Right cardiac atrium (tissue), 5 donors: ENCODE measurements at regions of chr4 and their contacts with region 1.

Region 1: DNA sequence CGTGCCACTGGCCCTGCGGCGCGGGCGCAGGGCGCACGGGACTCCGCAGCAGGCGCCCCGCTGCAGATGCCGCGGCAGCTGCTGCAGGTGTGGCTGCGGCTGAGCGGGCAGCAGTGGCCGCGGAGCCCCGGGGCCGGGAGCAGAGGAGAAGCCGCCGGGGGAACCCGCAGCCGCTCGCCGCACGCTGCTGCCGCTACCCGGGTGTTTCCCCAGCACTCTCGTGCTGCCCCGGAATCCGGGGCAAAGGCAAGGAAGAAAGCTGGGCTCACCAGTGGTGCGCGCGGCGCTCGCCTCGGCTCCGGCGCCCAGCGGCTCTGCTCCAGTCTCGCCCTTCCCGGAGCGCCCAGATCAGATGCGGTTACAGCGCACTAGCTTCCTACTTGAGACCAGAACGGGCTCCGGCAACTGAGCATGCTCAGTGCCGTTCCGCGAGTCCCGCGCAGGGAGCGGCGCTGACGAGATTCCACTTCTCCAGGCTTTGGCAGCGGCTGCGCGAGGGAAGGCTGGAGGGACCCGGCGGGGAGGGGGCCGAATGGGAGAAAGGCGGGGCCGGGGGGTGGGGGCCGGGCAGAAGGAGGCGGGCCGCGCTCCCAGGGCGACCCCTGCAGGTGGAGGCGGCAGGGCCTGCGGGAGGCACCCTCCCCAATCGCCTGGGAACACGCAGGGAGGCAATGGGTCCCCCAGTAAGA is at the start of gene APBB2:
- DNase-seq: peak; percentile 95 to 98 (median 98)
- ATAC-seq: peak; percentile 95 to 96
- H3K4me3 ChIP-seq: peak within 1 kb of the TSS; percentile 78
- H3K27ac ChIP-seq: peak within 1 kb of the TSS; percentile 81
- H3K4me1 ChIP-seq: peaks cover 6% of the 10 kb centered on the region
- H3K27me3 ChIP-seq: no peaks in the 10 kb centered on the region
- total RNA-seq, gene APBB2: 36.6 to 46.2 (median 39.6) TPM

Region 2: GRCh38 chr4:40924096-40924792 is 290.0 kb before region 1 on chr4:
- intact Hi-C with region 1: loop called (anchors 5 to 10 kb)
- DNase-seq: peak; percentile 59 to 85 (median 84)
- ATAC-seq: peak; percentile 57 to 66
- H3K4me3 ChIP-seq: no peak overlapping the region
- H3K27ac ChIP-seq: peak overlapping the region; percentile 13
- H3K4me1 ChIP-seq: peaks cover 5% of the 10 kb centered on the region
- H3K27me3 ChIP-seq: no peaks in the 10 kb centered on the region

Region 3: DNA sequence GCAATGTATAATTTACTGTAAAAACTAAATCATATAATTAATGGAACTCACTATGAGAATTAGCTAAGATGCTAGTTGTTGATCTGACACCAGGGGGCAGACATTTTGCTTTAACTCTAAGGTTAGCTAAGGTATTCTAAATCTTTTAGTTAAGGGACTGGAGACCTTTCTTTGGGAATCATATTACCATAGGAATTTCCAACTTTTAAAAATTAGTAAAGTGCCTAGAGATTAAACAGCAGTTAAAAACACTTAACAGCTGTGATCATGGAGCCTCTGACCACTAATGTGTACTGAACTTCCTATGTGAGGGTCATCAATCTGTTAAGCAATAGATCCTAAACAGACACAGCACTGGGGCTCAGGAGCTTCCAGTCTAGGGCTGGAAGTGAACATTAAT is 237.9 kb before region 1 on chr4:
- intact Hi-C with region 1: loop called (anchors 2 to 5 kb)
- DNase-seq: no peak
- ATAC-seq: peak; percentile 33 to 52
- H3K4me3 ChIP-seq: no peak overlapping the region
- H3K27ac ChIP-seq: no peak overlapping the region
- H3K4me1 ChIP-seq: peaks cover 1% of the 10 kb centered on the region
- H3K27me3 ChIP-seq: no peaks in the 10 kb centered on the region

Region 4: GRCh38 chr4:41050866-41051775 is 163.2 kb before region 1 on chr4:
- intact Hi-C with region 1: loop called in 1 of 4 experiments (anchors 5 kb)
- DNase-seq: peak; percentile 33 to 49 (median 49)
- ATAC-seq: peak; percentile 63 to 93
- H3K4me3 ChIP-seq: no peak overlapping the region
- H3K27ac ChIP-seq: peak overlapping the region; percentile 87
- H3K4me1 ChIP-seq: peaks cover 9% of the 10 kb centered on the region
- H3K27me3 ChIP-seq: no peaks in the 10 kb centered on the region

Region 5: DNA sequence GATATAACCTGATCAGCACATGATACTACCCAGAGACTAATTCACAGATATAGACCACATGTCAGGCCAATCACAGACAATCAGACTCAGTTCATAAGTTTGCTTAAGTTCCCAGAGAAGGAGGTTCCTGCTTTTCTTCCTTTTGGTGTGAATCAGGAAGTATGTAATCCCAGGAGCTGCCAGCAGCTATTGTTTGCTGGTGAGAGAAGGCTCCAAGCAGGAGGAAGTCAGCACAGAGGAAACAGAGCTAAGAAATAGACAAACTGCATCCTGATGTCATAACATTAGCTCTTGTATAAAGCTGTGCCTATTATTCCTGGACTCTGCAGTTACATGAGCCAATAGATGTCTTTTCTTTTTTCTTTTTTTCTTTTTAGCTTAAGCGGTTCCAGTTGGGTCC is 93.4 kb after region 1 on chr4:
- intact Hi-C with region 1: no loop called
- DNase-seq: no peak
- ATAC-seq: peak; percentile 63 to 84
- H3K4me3 ChIP-seq: no peak overlapping the region
- H3K27ac ChIP-seq: no peak overlapping the region
- H3K4me1 ChIP-seq: peaks cover 2% of the 10 kb centered on the region
- H3K27me3 ChIP-seq: no peaks in the 10 kb centered on the region

Region 6: GRCh38 chr4:41360214-41360920 is 146.1 kb after region 1 on chr4:
- intact Hi-C with region 1: no loop called
- DNase-seq: peak; percentile 81 to 94 (median 93)
- ATAC-seq: peak; percentile 92 to 93
- H3K4me3 ChIP-seq: peak overlapping the region; percentile 83
- H3K27ac ChIP-seq: peak overlapping the region; percentile 69
- H3K4me1 ChIP-seq: peaks cover 4% of the 10 kb centered on the region
- H3K27me3 ChIP-seq: no peaks in the 10 kb centered on the region

Region 7: DNA sequence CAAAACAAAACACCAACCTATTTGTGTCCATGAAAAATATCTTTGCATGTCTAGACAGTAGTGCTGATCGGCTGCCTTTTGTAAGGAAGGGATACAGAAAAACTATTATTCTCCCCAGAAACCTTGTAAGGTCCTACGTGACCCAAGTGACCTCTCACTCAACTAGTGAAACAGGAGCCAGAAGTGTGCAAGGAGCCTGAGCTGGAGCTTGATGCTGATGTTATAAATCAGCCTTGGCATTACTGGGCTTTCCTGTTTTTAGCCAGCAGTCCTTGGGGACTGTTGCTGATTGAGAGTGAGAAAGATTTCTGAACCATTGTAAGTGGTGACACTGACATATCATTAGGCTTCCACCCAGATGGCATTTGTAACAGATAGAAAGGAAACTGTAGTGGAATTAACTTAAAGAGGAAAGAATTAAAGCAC is 222.8 kb after region 1 on chr4:
- intact Hi-C with region 1: no loop called
- DNase-seq: no peak
- ATAC-seq: peak; percentile 75 to 81
- H3K4me3 ChIP-seq: peak overlapping the region; percentile 13
- H3K27ac ChIP-seq: peak overlapping the region; percentile 95
- H3K4me1 ChIP-seq: peaks cover 20% of the 10 kb centered on the region
- H3K27me3 ChIP-seq: no peaks in the 10 kb centered on the region

Region 8: DNA sequence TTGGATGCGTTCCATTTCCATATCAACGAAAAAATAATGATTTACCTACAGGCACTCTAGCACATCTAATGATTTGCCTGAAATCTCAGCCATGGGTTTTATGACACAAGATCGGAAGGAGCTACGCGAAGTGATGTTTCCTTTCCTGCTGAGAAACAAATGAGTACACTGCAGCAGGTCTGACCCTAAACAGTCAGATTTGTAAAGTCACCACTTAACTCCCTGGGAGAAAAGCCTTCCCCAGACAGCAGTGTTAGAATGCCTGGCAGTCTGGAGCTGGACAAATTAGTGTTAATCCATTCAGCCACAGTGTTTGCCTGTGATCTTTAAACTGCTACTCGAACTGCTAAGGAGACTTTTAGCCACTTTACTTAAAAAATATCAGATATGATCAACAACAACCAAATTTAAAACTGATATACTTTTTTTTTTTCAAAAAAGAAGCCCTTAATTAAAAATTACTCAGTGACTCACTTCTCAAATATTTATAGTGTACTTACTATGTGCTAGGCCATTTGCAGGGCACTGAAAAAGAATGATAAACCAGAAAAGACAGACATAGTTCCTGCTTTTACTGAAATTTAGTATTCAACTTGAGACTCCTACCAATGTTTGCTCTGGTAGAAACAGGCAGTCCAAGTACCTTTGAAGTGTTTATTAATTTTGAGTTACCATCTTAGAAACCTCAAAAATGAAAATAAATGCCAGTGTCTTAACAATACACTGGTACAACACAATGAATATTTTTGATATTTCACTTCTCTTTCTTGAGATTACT is 1287.5 kb after region 1 on chr4:
- intact Hi-C with region 1: no loop called
- DNase-seq: no peak
- ATAC-seq: peak in 1 of 2 donors; percentile 55
- H3K4me3 ChIP-seq: no peak overlapping the region
- H3K27ac ChIP-seq: no peak overlapping the region
- H3K4me1 ChIP-seq: no peaks in the 10 kb centered on the region
- H3K27me3 ChIP-seq: no peaks in the 10 kb centered on the region